ENCODE measurements at regions of chr1 and their contacts with region 1.

Region 1: DNA sequence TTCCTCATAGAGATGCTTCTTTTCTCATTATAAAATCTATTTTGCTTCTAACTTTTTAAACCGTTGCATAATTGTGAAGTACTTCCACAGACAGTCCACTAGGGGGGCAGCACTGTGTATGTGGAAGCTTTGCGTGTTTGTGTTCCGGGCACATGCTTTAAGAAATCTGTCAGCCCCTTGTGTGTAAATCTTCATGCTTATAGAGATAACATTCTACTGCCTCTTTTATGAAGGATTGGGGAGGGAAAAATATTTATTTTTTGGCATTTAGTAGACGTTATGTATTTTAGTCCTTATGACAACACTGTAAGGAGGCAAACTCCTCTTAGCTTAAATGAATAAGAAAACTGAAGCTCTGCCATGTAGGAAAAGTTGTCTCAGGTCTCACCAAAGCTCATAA is 157.3 kb upstream of the PTGFR start:
- DNase-seq: no peak
- H3K4me3 ChIP-seq: no peak overlapping the region
- CTCF ChIP-seq: peak; percentile 49

Region 2: GRCh38 chr1:76799700-76800099 is 1533.8 kb before region 1 on chr1:
- CTCF ChIA-PET with region 1: no interaction called
- POLR2A ChIA-PET with region 1: no interaction called
- DNase-seq: no peak
- H3K4me3 ChIP-seq: no peak overlapping the region
- CTCF ChIP-seq: no peak

Region 3: GRCh38 chr1:78004719-78005447 is 328.6 kb before region 1 on chr1 and contains the start of gene DNAJB4:
- CTCF ChIA-PET with region 1: no interaction called
- POLR2A ChIA-PET with region 1: no interaction called
- DNase-seq: peak; percentile 92
- H3K4me3 ChIP-seq: peak within 1 kb of the TSS; percentile 61
- CTCF ChIP-seq: no peak

Region 4: GRCh38 chr1:78156805-78157521 is 176.5 kb before region 1 on chr1:
- CTCF ChIA-PET with region 1: no interaction called
- POLR2A ChIA-PET with region 1: no interaction called
- DNase-seq: peak; percentile 80
- H3K4me3 ChIP-seq: no peak overlapping the region
- CTCF ChIP-seq: no peak

Region 5: DNA sequence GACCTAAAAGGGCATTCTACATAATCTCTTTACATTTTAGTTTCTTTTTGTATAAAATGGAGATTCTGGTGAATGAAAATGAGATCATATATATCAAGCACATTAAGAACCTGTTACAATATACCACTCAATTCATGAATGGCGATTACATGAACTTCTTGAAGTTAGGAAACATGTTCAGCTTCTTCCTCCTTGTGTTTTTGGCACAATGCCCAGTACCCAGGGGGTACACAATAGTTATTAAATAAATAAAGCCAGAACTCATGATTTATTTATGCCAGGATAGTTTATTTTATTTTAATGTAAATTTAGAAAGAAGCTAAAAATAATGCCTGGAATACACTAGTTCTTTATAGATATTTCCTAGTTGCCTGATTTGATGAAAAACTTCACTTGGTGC is 28.7 kb before region 1 on chr1:
- CTCF ChIA-PET with region 1: interaction called, 11 read pairs
- POLR2A ChIA-PET with region 1: no interaction called
- DNase-seq: no peak
- H3K4me3 ChIP-seq: no peak overlapping the region
- CTCF ChIP-seq: no peak

Region 6: DNA sequence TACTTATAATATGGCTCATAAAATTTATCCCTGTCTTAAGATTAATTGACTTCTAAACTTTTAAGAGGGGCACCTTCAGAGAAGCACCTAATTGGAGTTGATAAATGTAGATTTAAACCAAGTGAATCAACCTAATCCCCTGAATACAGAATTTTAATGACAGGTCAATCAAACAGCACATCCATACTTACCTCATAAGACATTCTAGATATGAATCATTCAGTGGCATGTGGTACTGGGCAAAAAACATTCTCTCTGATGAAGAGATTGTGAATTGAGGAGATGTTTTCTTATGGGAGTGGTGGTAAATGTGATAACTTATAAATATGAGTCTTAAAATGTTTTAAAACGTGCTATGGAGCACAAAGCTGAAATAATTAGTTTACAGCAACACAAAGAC is 10.2 kb before region 1 on chr1:
- CTCF ChIA-PET with region 1: interaction called, 33 read pairs
- POLR2A ChIA-PET with region 1: no interaction called
- DNase-seq: no peak
- H3K4me3 ChIP-seq: no peak overlapping the region
- CTCF ChIP-seq: no peak

Region 7: GRCh38 chr1:78355656-78356055 is 22.2 kb after region 1 on chr1:
- CTCF ChIA-PET with region 1: interaction called, 11 read pairs
- POLR2A ChIA-PET with region 1: no interaction called
- DNase-seq: no peak
- H3K4me3 ChIP-seq: no peak overlapping the region
- CTCF ChIP-seq: no peak